ENCODE measurements at regions of chr9 and their contacts with region 1.

Region 1: DNA sequence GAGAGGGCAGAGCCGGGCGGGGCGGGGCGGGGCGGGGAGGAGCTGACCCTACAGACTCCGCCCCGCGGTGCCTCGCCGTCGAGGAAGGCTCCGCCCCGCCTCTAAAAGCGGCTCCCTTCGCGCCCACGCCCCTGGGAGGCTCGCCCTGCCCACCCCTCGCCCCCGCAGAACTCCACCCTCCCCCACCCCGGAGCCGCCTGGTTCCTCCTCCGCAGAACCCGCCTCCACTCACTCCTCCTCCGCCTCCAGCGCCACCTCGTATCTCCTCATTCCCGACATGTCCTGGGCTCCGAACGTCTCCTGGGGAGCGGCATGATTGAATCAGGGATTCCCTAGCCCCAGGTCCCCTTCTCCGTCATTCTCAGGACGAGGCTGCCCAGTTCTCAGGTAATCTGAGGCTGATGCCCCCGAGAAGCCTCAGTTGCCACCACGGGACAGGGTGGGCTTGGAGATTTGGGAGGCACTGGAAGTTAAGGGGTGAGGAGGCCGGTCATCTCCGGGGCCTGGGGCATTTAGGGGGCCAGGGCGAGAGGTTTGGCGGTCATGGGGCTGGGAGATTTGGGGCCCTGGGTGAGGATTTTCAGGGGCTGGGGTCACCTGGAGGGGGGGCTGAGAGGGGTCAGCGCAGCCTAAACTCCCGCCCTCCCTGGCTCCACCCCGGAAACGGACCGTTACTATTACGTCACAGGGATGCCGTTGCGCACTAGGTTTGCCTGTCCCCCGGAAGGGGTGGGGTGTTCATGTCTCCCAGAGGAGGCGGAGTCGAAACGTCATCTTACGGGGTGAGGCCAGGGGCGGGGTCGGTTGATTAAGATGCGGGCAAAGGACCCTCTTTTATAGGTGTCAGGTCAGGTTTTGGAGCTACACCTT is 3.2 kb upstream of the CCL27 start:
- DNase-seq: peak; percentile 83
- H3K4me3 Mint-ChIP-seq: peak overlapping the region; percentile 85
- H3K27ac Mint-ChIP-seq: peak overlapping the region; percentile 82
- H3K4me1 Mint-ChIP-seq: peaks cover 34% of the 10 kb centered on the region
- H3K27me3 Mint-ChIP-seq: no peaks in the 10 kb centered on the region

Region 2: DNA sequence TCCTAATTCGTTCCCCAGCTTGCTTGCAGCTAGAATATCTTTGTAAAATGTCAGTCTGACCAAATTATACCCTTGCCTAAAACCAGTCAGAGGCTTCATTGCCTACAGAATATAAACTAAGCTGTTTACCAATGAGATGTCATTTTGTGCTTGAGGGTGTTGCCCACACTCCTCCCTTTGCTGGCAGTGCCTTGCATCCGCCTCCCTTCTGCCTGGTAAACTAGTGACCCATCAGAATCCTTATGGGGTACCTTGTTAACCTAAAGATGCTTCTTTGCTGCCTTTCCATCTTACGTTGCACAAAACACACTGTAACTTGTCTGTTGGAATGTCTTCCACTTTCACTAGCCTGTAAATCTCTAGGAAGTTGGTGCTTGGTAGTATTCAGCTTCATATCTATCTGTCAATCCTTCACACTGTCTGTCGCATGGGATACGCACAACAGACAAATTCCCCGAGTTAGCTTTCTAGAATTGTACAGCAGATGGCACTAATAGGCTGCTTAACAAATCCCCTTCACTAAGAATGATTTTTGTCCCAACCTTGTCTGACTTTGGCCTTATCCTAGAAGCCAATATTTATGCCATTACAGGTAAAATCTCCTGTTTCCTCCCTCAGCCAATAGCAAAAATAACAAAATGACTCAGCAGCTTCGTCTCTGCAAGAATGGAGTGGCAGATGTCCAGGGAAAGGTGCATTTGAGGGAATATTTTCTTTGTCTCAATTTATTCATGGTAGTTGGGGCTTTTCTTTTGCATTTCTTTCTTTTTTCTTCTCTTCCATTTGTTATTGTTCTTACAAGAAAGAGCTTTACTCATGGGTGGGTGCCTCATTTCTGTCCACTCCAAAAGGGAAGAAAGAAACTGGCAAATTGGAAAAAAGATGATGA is 333.3 kb before region 1 on chr9:
- intact Hi-C with region 1: no loop called
- DNase-seq: no peak
- H3K4me3 Mint-ChIP-seq: peak overlapping the region; percentile 1
- H3K27ac Mint-ChIP-seq: no peak overlapping the region
- H3K4me1 Mint-ChIP-seq: peaks cover 32% of the 10 kb centered on the region
- H3K27me3 Mint-ChIP-seq: no peaks in the 10 kb centered on the region

Region 3: DNA sequence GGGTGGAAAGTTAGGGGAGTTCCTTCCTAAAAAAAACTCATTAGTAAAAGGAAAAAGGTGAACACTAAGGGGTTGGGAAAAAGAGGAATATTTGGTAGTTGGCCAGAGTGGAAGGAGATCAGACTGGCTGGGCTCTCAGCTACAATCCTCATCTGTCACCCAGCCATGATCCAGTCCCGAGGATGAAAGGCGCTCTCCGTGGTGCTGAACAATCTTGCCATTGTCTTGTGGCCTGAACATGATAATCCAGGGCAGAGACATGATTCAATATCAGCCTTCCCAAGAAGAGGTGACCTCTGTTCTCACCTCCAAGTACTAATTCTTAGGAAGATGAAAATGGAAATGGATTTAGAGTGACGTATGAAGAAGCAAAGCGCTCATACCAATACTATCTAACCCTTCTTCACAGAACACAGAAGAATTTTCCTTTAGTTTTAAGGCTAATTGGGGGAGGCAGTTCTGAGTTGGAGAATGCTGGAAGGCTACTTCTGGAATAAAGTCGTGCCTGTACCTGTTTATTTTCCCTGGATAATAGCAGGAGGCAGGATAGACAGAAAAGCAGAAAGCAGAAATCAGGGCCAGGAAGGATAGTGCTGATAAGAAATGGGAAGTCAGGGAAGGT is 252.3 kb before region 1 on chr9:
- intact Hi-C with region 1: no loop called
- DNase-seq: peak; percentile 25
- H3K4me3 Mint-ChIP-seq: no peak overlapping the region
- H3K27ac Mint-ChIP-seq: no peak overlapping the region
- H3K4me1 Mint-ChIP-seq: no peaks in the 10 kb centered on the region
- H3K27me3 Mint-ChIP-seq: no peaks in the 10 kb centered on the region

Region 4: GRCh38 chr9:34637356-34638137 is 28.1 kb before region 1 on chr9 and contains the start of gene SIGMAR1:
- intact Hi-C with region 1: loop called (anchors 2 kb)
- DNase-seq: peak; percentile 93
- H3K4me3 Mint-ChIP-seq: peak within 1 kb of the TSS; percentile 97
- H3K27ac Mint-ChIP-seq: peak within 1 kb of the TSS; percentile 86
- H3K4me1 Mint-ChIP-seq: peaks cover 31% of the 10 kb centered on the region
- H3K27me3 Mint-ChIP-seq: no peaks in the 10 kb centered on the region
- total RNA-seq, gene SIGMAR1: 105 and 109 TPM in 2 replicates

Region 5: DNA sequence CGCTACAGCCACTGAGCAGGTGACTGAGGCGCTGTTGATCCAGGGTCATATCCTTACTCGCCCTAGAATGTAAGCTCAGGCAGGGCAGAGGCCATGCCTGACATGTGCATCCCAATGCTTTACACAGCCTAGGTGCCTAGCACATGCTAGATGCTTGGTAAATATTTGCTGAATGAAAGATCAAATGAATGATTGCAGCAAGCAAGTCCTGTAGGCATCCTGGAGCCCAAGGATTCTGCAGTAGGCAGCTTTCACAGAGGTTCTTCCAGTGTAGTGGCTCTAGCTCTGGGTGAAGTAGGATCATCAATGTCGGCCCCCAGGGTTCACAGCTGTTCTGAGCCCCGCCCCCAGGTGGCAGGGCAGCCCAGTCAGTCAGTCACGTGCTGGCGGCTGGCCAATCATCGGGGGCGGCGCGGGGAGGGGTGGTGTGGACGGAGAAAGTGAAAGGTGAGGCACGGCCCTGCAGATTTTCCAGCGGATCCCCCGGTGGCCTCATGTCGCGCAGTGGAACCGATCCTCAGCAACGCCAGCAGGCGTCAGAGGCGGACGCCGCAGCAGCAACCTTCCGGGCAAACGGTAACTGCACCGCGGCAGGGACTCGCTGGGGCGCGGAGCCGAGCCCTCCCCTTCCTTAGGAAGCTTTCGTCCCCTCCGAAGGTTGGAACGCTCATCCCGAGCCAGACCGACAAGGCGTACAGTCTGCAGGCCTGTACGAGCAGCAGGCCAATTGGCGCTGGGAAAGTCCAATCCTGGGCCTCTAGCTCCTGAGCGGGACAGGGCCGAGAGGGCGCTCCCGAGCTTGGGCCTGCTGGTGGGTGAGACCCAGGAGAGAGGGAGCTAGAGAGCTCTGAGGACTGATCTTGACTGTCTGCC is 19.2 kb before region 1 on chr9 and contains the start of gene GALT:
- intact Hi-C with region 1: loop called (anchors 2 kb)
- DNase-seq: peak; percentile 95
- H3K4me3 Mint-ChIP-seq: peak within 1 kb of the TSS; percentile 93
- H3K27ac Mint-ChIP-seq: peak within 1 kb of the TSS; percentile 87
- H3K4me1 Mint-ChIP-seq: peaks cover 28% of the 10 kb centered on the region
- H3K27me3 Mint-ChIP-seq: no peaks in the 10 kb centered on the region
- total RNA-seq, gene GALT: 74.3 and 78.4 TPM in 2 replicates

Region 6: DNA sequence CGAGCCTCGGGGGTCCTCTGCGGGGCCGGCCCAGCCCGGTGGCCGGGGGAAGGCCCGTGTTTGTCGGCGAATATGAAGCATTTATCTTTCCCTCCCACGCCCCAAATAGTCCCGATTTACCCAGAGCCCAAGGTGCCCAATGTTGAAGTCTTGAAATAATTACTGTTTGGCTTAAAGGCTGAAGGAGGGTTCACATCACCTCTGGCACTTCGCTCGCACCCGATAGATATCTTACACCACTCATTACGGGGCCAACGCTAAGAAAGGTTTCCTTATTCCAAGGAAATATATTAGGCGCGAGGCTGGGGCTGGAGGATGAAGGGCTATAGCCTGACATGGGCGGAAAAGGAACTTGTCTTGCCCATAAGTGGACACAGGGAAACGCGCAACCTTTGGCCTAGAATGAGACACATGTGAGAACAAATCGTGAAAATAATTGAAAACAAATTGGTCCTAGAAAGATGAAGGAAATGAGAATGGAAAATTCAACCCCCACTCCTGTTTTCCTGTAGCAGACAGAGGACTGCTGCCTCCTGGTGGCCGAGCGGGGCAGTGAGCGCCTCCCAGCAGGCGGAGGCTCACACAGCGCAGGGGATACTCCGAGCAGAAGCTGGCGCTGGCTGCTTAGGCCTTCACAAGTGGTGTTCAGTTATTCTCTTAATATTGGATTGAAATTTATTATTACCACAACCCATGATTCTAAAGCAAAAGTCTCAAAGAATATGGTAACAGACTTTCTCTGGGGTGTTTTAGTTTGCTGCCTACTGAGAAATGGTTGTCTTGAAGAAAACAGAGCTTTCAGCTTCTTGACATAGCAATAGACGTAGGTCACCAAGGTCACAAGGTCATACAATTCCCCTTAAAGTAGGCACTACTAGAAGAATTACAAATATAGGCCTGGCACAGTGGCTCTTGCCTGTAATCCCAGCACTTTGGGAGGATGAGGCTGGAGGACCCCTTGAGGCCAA is 36.4 kb after region 1 on chr9:
- intact Hi-C with region 1: loop called (anchors 1 kb)
- DNase-seq: peak; percentile 69
- H3K4me3 Mint-ChIP-seq: peak overlapping the region; percentile 79
- H3K27ac Mint-ChIP-seq: peak overlapping the region; percentile 29
- H3K4me1 Mint-ChIP-seq: peaks cover 5% of the 10 kb centered on the region
- H3K27me3 Mint-ChIP-seq: peaks cover 19% of the 10 kb centered on the region

Region 7: DNA sequence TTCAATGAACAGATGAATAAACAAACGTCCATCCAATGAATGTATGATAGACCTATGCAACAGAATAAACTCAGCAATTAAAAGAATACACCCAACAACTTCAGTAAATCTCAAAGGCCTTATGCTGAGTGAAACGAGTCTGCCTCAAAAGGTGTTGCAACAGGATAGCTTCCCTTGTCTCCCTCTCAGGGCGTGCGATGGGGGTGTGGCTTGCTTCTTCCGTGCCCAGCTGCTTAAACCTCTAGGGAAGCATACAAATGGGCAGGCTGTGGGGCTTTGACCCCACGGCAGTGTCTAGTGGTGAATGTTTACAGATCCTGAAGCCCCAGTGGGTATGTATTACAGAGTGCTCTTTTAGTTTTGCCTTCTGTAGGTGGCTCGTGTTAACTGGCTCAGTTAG is 131.3 kb after region 1 on chr9:
- intact Hi-C with region 1: no loop called
- DNase-seq: no peak
- H3K4me3 Mint-ChIP-seq: no peak overlapping the region
- H3K27ac Mint-ChIP-seq: no peak overlapping the region
- H3K4me1 Mint-ChIP-seq: no peaks in the 10 kb centered on the region
- H3K27me3 Mint-ChIP-seq: peaks cover 13% of the 10 kb centered on the region